ENCODE measurements at regions of chr1 and their contacts with region 1.

Region 1: GRCh38 chr1:39275836-39276507 is 71.5 kb downstream of the MACF1 start:
- DNase-seq: peak; percentile 82
- H3K4me3 ChIP-seq: no peak overlapping the region
- H3K27ac ChIP-seq: peak overlapping the region; percentile 73
- H3K4me1 ChIP-seq: peaks cover 45% of the 10 kb centered on the region
- H3K27me3 ChIP-seq: no peaks in the 10 kb centered on the region
- CTCF ChIP-seq: no peak

Region 2: DNA sequence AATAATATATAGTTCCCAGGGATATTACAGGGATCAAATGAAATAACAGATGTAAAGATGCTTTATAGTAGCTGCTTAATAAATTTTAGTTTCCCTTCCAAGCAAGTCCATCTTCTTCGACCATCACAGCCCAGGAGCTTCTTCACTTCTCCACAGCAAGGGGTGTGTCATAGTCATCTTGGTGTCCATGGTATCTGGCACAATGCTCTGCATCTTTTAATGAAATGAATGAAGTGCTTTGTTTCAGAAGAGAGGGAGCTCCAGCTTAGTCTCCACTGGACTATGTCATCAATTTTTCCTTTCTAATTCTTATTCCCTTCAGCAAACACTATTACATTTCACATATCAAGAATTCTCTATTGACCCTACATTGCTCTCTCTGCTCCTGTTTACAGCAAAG is 76.4 kb before region 1 on chr1:
- CTCF ChIA-PET with region 1: no interaction called
- dilution Hi-C with region 1: no loop called
- in situ Hi-C with region 1: no loop called
- intact Hi-C with region 1: no loop called
- DNase-seq: no peak
- H3K4me3 ChIP-seq: no peak overlapping the region
- H3K27ac ChIP-seq: no peak overlapping the region
- H3K4me1 ChIP-seq: peaks cover 38% of the 10 kb centered on the region
- H3K27me3 ChIP-seq: no peaks in the 10 kb centered on the region
- CTCF ChIP-seq: no peak

Region 3: GRCh38 chr1:39326832-39327231 is 50.9 kb after region 1 on chr1:
- CTCF ChIA-PET with region 1: no interaction called
- dilution Hi-C with region 1: loop called (anchors 5 kb)
- in situ Hi-C with region 1: no loop called
- intact Hi-C with region 1: no loop called
- DNase-seq: no peak
- H3K4me3 ChIP-seq: no peak overlapping the region
- H3K27ac ChIP-seq: no peak overlapping the region
- H3K4me1 ChIP-seq: peaks cover 7% of the 10 kb centered on the region
- H3K27me3 ChIP-seq: no peaks in the 10 kb centered on the region
- CTCF ChIP-seq: no peak